CD8-positive, alpha-beta memory T cell (primary cell): ENCODE measurements at regions of chr1 and their contacts with region 1.

Region 1: GRCh38 chr1:207963427-207964194 is 52.7 kb upstream of the CD34 start:
- DNase-seq: peak; percentile 79 to 88 (median 81)
- H3K4me3 ChIP-seq: peak overlapping the region; percentile 74
- H3K4me3 Mint-ChIP-seq: peak overlapping the region; percentile 75 to 89 (median 87)
- H3K27ac ChIP-seq: peak overlapping the region; percentile 65
- H3K27ac Mint-ChIP-seq: peak overlapping the region in 5 of 8 donors; percentile 52 to 89 (median 70)
- H3K4me1 ChIP-seq: peaks cover 5% of the 10 kb centered on the region
- H3K4me1 Mint-ChIP-seq: peaks cover 11 to 22% (median 14%) of the 10 kb centered on the region in 3 donors
- H3K27me3 ChIP-seq: peaks cover 12% of the 10 kb centered on the region
- H3K27me3 Mint-ChIP-seq: peaks cover 14 to 26% of the 10 kb centered on the region in 2 donors

Region 2: GRCh38 chr1:207579436-207579799 is 384.2 kb before region 1 on chr1:
- CTCF ChIA-PET with region 1: interaction called, 13 read pairs
- POLR2A ChIA-PET with region 1: no interaction called
- DNase-seq: peak in 4 of 5 donors; percentile 3 to 47 (median 14)
- H3K4me3 ChIP-seq: no peak overlapping the region
- H3K4me3 Mint-ChIP-seq: no peak overlapping the region
- H3K27ac ChIP-seq: no peak overlapping the region
- H3K27ac Mint-ChIP-seq: peak overlapping the region in 1 of 8 donors; percentile 18
- H3K4me1 ChIP-seq: no peaks in the 10 kb centered on the region
- H3K4me1 Mint-ChIP-seq: peaks cover 1 to 7% (median 6%) of the 10 kb centered on the region in 3 donors
- H3K27me3 ChIP-seq: no peaks in the 10 kb centered on the region
- H3K27me3 Mint-ChIP-seq: peaks cover 2 to 14% of the 10 kb centered on the region in 2 donors

Region 3: DNA sequence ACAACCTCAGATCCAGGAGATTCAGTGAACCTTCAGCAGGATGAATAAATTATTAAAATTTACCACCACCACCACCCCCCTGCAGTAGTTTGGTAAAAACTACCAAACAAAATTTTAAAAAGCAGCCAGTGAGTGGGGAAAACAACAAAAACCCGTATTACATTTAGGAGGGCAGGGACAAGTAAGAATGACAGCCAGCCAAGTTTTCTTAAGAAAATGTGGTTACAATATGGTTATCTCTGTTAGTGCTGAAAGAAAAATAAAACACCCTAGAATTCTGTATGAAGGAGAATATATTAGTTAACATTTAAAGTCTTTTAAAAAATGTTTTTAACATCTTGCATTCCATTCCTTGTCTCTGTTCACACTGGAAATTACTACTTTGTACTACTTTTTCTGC is 197.0 kb before region 1 on chr1:
- CTCF ChIA-PET with region 1: no interaction called
- POLR2A ChIA-PET with region 1: no interaction called
- DNase-seq: no peak
- H3K4me3 ChIP-seq: no peak overlapping the region
- H3K4me3 Mint-ChIP-seq: no peak overlapping the region
- H3K27ac ChIP-seq: no peak overlapping the region
- H3K27ac Mint-ChIP-seq: peak overlapping the region in 1 of 8 donors; percentile 5
- H3K4me1 ChIP-seq: no peaks in the 10 kb centered on the region
- H3K4me1 Mint-ChIP-seq: peaks cover 4 to 23% (median 14%) of the 10 kb centered on the region in 3 donors
- H3K27me3 ChIP-seq: no peaks in the 10 kb centered on the region
- H3K27me3 Mint-ChIP-seq: no peaks in the 10 kb centered on the region

Region 4: DNA sequence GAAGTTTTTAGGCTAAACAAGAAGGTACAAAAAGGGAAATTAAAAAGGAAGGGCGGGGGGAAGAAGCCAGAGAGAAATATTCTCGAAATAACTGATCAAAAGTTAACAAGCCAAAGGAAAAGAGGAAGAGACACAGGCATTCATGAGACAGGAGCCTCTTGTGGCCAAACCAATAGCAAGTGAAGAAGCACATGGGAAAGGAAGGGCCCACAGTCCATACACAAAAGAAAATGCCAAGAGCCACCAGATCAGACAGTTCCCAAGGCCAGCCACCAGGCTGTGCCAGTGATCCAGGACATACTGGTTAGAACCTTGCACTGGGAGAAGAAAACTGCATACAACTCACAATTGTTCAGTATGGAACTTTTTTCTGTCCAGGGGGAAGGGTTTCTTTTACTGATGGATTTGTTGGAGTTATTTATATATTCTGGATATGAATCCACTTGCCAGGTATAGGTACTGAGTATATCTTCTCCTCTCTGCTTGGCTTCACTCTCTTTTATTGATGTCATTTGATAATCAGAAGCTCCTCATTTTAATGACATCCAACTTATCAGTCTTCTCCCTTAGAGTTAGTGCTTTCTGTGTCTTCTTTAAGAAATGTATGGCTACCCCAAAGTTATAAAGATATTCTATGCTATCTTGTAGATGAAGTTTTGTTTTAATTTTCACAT is 135.0 kb before region 1 on chr1:
- CTCF ChIA-PET with region 1: interaction called, 92 read pairs
- POLR2A ChIA-PET with region 1: interaction called, 3 read pairs
- DNase-seq: peak; percentile 32 to 73 (median 47)
- H3K4me3 ChIP-seq: no peak overlapping the region
- H3K4me3 Mint-ChIP-seq: no peak overlapping the region
- H3K27ac ChIP-seq: peak overlapping the region; percentile 48
- H3K27ac Mint-ChIP-seq: peak overlapping the region; percentile 65 to 98 (median 86)
- H3K4me1 ChIP-seq: peaks cover 88% of the 10 kb centered on the region
- H3K4me1 Mint-ChIP-seq: peaks cover 84 to 100% (median 98%) of the 10 kb centered on the region in 3 donors
- H3K27me3 ChIP-seq: no peaks in the 10 kb centered on the region
- H3K27me3 Mint-ChIP-seq: peaks cover 4% of the 10 kb centered on the region in 2 donors

Region 5: GRCh38 chr1:207876131-207876530 is 87.5 kb before region 1 on chr1:
- CTCF ChIA-PET with region 1: interaction called, 13 read pairs
- POLR2A ChIA-PET with region 1: no interaction called
- DNase-seq: no peak
- H3K4me3 ChIP-seq: no peak overlapping the region
- H3K4me3 Mint-ChIP-seq: no peak overlapping the region
- H3K27ac ChIP-seq: no peak overlapping the region
- H3K27ac Mint-ChIP-seq: peak overlapping the region in 2 of 8 donors; percentile 22 to 46
- H3K4me1 ChIP-seq: peaks cover 33% of the 10 kb centered on the region
- H3K4me1 Mint-ChIP-seq: peaks cover 32 to 53% (median 35%) of the 10 kb centered on the region in 3 donors
- H3K27me3 ChIP-seq: no peaks in the 10 kb centered on the region
- H3K27me3 Mint-ChIP-seq: peaks cover 0 to 1% of the 10 kb centered on the region in 2 donors

Region 6: GRCh38 chr1:207952617-207953542 is 10.7 kb before region 1 on chr1:
- CTCF ChIA-PET with region 1: interaction called, 26 read pairs
- POLR2A ChIA-PET with region 1: no interaction called
- DNase-seq: no peak
- H3K4me3 ChIP-seq: no peak overlapping the region
- H3K4me3 Mint-ChIP-seq: no peak overlapping the region
- H3K27ac ChIP-seq: no peak overlapping the region
- H3K27ac Mint-ChIP-seq: no peak overlapping the region
- H3K4me1 ChIP-seq: no peaks in the 10 kb centered on the region
- H3K4me1 Mint-ChIP-seq: no peaks in the 10 kb centered on the region
- H3K27me3 ChIP-seq: peaks cover 1% of the 10 kb centered on the region
- H3K27me3 Mint-ChIP-seq: peaks cover 20 to 39% of the 10 kb centered on the region in 2 donors